BJ (cell line): ENCODE measurements at regions of chr11 and their contacts with region 1.

Region 1: DNA sequence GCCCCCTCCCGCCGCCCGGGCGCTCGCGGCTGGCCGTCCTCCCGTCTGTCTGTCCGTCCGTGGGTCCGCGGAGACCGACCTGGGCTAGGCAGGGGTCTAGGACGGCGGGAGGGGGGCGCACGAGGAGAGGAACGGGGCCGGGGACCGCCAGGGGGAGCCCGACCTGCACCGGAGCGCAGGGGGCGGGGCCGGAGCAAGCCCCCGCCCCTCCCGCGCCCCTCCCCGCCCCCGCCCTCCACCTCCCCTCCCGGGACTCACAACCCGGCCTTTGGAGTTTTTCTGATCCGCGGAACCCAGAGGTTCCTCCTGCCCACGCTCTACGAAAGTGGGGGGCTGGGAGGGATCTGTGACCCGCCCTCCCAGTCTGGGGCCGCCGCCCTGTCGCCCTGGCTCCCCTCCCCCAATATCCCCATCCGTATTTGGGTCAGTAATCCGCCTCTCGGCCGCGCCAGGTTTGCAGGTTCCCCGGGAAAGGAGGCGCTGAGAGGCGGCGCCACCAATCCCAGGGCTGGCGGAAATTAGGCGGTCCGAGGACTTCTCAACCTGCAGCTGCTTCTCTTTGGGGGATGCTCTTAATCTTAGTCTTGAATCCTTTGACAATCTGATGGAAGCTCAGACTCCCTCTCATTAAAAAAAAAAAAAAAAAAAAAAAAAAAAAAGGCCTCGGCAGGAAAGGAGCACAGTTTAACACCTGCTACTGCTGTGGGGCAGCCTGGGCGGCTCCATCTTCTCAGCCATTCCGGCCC is 925 bp upstream of the KCNJ11 start:
- DNase-seq: no peak
- H3K4me3 ChIP-seq: peak overlapping the region; percentile 40
- H3K27me3 ChIP-seq: peaks cover 6% of the 10 kb centered on the region; the same call in 1 of the 2 replicates
- CTCF ChIP-seq: peak; percentile 50

Region 2: DNA sequence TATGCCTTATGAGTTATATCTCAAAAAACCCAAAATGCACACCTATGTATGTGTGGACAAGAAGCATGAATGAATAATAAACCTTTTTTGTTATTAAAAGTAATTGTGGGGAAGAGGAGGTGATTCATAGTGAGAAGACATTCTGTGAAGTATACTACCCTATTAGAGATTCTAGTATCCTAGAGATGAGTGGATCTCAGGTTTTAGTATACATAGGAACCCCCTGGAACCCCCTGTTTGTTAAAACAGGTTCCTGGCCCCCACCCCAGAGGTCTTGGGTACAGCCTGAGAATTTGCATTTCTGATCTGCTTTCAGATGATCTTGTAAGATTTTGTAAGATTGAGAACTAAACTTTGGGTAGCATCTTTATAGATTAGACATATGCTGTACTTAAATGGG is 95.4 kb before region 1 on chr11:
- CTCF ChIA-PET with region 1: no interaction called
- POLR2A ChIA-PET with region 1: no interaction called
- DNase-seq: no peak
- H3K4me3 ChIP-seq: no peak overlapping the region
- H3K27me3 ChIP-seq: no peaks in the 10 kb centered on the region
- CTCF ChIP-seq: no peak

Region 3: GRCh38 chr11:17403982-17404759 is 14.8 kb after region 1 on chr11:
- CTCF ChIA-PET with region 1: interaction called, 66 read pairs
- POLR2A ChIA-PET with region 1: no interaction called
- DNase-seq: no peak
- H3K4me3 ChIP-seq: no peak overlapping the region
- H3K27me3 ChIP-seq: peaks cover 3% of the 10 kb centered on the region; the same call in 1 of the 2 replicates
- CTCF ChIP-seq: no peak

Region 4: DNA sequence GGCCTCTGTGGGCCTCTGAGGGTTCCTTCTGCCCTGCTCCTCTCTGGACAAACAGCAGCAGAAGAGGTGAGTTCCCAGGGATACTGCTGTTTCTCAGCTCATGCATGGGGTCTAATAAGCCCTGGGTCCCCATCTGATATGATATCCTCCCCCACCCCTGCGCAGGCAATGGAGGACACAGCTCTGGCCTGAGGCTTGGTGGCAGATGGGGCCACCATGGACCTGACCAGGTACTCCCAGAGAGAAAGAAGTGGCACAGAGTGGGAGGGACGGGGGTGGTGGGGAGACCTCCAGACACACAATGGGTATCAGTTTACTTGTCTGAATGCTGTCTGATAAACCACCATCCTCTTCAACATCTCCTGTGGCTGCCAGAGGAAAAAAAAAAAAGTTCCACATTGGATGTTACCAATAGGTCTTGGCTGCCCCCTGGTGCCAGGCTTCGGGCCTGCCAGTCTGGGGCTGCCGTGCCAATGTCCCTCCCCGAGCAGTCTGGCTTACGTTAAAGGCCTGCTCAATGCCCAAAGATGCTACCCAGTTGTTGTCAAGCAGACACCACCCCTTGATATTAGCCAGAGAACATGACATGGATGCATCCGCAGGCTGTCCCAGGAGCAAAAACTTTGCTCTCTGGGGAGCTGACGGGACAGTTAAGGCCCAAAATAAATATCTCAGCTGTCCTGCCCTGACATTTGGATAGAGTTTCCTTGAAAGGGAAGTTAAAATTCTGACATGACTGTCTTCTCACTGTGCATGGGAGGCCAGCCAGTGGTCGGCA is 115.1 kb after region 1 on chr11:
- CTCF ChIA-PET with region 1: interaction called, 101 read pairs
- POLR2A ChIA-PET with region 1: no interaction called
- DNase-seq: no peak
- H3K4me3 ChIP-seq: no peak overlapping the region
- H3K27me3 ChIP-seq: peaks cover 5% of the 10 kb centered on the region
- CTCF ChIP-seq: peak; percentile 91